Dorsolateral prefrontal cortex (tissue), 120 donors: ENCODE measurements at regions of chr9 and their contacts with region 1.

Region 1: GRCh38 chr9:118510711-118511110 is 806.5 kb downstream of the TLR4 start:
- DNase-seq: no peak
- H3K4me3 ChIP-seq: no peak overlapping the region
- H3K27ac ChIP-seq: no peak overlapping the region
- H3K27me3 ChIP-seq: no peaks in the 10 kb centered on the region
- CTCF ChIP-seq: no peak

Region 2: GRCh38 chr9:118459913-118460312 is 50.8 kb before region 1 on chr9:
- intact Hi-C with region 1: loop called in 1 of 2 experiments (anchors 10 kb)
- DNase-seq: peak in 1 of 10 donors; percentile 76
- H3K4me3 ChIP-seq: no peak overlapping the region
- H3K27ac ChIP-seq: peak overlapping the region in 1 of 59 donors; percentile 55
- H3K27me3 ChIP-seq: peaks cover 0 to 14% (median 0%) of the 10 kb centered on the region in 45 donors
- CTCF ChIP-seq: no peak